CD8-positive, alpha-beta T cell (primary cell): ENCODE measurements at regions of chr12 and their contacts with region 1.

Region 1: GRCh38 chr12:31728917-31729640 is at the start of gene AMN1:
- DNase-seq: peak; percentile 97 to 100 (median 98)
- ATAC-seq: peak; percentile 89
- H3K4me3 ChIP-seq: peak within 1 kb of the TSS; percentile 72 to 76
- H3K4me3 Mint-ChIP-seq: peak within 1 kb of the TSS; percentile 99
- H3K27ac ChIP-seq: peak within 1 kb of the TSS; percentile 91 to 92
- H3K27ac Mint-ChIP-seq: peak within 1 kb of the TSS; percentile 99
- H3K4me1 ChIP-seq: peaks cover 34% of the 10 kb centered on the region
- H3K4me1 Mint-ChIP-seq: peaks cover 65% of the 10 kb centered on the region
- H3K27me3 ChIP-seq: no peaks in the 10 kb centered on the region
- H3K27me3 Mint-ChIP-seq: no peaks in the 10 kb centered on the region
- CTCF ChIP-seq: no peak
- total RNA-seq, gene AMN1: 5.9 to 6.2 TPM

Region 2: DNA sequence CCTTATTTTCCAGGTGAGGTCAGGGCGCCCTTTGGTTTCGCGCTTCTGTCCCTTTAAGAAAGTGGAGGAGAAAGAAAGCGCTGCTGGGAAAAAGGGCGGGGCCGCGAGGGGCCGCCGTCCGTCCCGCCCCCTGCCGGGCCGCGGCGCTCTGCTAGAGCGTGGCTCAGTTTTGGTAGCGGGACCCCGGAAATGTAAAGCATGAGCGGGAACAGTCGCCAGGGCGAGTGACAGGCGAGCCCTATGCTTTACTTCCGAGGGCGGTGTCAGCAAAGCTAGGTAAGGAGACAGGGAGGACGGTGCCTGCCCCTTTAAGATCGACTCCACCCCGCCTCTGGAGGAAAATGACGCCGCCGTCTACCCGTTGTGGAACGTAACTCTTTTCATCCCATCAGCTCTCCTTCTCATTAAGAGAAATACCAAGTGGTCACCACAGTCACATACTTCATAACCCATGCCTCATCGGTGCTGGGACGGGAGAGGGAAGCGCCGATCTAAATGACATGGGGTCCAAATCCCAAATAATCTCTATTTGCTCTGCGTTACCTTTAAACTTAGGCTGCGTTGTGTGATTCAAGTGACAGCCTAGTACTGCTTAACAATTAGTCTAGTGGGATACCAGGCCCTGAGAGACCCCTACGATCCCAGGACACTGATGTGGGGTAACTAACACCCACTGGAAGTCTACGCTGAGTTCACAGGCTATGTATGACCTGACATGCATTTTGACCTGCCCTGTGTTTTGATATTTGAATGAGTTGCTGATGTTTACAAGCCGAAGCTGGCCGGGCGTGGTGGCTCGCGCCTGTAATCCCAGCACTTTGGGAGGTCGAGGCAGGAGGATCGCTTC is 69.8 kb before region 1 on chr12 and contains the start of gene ETFBKMT:
- CTCF ChIA-PET with region 1: interaction called, 4 read pairs
- POLR2A ChIA-PET with region 1: interaction called, 7 read pairs
- intact Hi-C with region 1: loop called (anchors 1 kb)
- DNase-seq: peak; percentile 84 to 97 (median 92)
- ATAC-seq: peak; percentile 99
- H3K4me3 ChIP-seq: peak within 1 kb of the TSS; percentile 82 to 87
- H3K4me3 Mint-ChIP-seq: peak within 1 kb of the TSS; percentile 98
- H3K27ac ChIP-seq: peak within 1 kb of the TSS; percentile 89 to 92
- H3K27ac Mint-ChIP-seq: peak within 1 kb of the TSS; percentile 100
- H3K4me1 ChIP-seq: peaks cover 11% of the 10 kb centered on the region
- H3K4me1 Mint-ChIP-seq: peaks cover 14% of the 10 kb centered on the region
- H3K27me3 ChIP-seq: no peaks in the 10 kb centered on the region
- H3K27me3 Mint-ChIP-seq: no peaks in the 10 kb centered on the region
- CTCF ChIP-seq: peak; percentile 22
- total RNA-seq, gene ETFBKMT: 0.41 to 1.0 TPM

Region 3: DNA sequence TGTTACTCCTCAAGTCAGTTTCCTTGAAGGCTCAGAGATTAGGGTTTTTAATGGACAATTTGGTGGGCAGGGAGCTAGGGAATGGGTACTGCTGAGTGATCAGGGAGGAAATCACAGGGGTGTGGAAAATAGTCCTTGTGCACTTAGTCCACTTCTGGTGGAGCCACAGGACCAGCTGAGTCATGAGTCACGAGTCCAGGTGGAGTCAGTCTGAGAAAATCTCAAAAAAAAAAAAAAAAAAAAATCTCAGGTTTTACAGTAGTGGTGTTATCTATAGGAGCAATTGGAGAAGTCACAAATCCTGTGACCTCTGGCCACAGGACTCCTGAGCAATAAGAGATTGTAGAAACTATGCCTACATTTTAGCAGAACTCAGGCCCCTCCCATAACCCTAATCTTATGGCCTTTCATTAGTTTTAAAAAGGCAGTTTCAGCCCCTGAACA is 27.9 kb after region 1 on chr12:
- CTCF ChIA-PET with region 1: no interaction called
- POLR2A ChIA-PET with region 1: no interaction called
- intact Hi-C with region 1: loop called in 1 of 2 experiments (anchors 5 kb)
- DNase-seq: no peak
- ATAC-seq: no peak
- H3K4me3 ChIP-seq: no peak overlapping the region
- H3K4me3 Mint-ChIP-seq: no peak overlapping the region
- H3K27ac ChIP-seq: no peak overlapping the region
- H3K27ac Mint-ChIP-seq: no peak overlapping the region
- H3K4me1 ChIP-seq: no peaks in the 10 kb centered on the region
- H3K4me1 Mint-ChIP-seq: peaks cover 21% of the 10 kb centered on the region
- H3K27me3 ChIP-seq: peaks cover 0 to 2% of the 10 kb centered on the region in 2 experiments
- H3K27me3 Mint-ChIP-seq: no peaks in the 10 kb centered on the region
- CTCF ChIP-seq: no peak

Region 4: GRCh38 chr12:31890295-31891285 is 161.5 kb after region 1 on chr12:
- CTCF ChIA-PET with region 1: interaction called, 3 read pairs
- POLR2A ChIA-PET with region 1: interaction called, 25 read pairs
- intact Hi-C with region 1: no loop called
- DNase-seq: peak in 3 of 9 experiments; percentile 16 to 81 (median 64)
- ATAC-seq: peak; percentile 89
- H3K4me3 ChIP-seq: no peak overlapping the region
- H3K4me3 Mint-ChIP-seq: peak overlapping the region; percentile 51
- H3K27ac ChIP-seq: peak overlapping the region; percentile 19 to 66
- H3K27ac Mint-ChIP-seq: peak overlapping the region; percentile 90
- H3K4me1 ChIP-seq: peaks cover 70% of the 10 kb centered on the region
- H3K4me1 Mint-ChIP-seq: peaks cover 60% of the 10 kb centered on the region
- H3K27me3 ChIP-seq: no peaks in the 10 kb centered on the region
- H3K27me3 Mint-ChIP-seq: no peaks in the 10 kb centered on the region
- CTCF ChIP-seq: no peak

Region 5: GRCh38 chr12:31966558-31967205 is 237.6 kb after region 1 on chr12:
- CTCF ChIA-PET with region 1: no interaction called
- POLR2A ChIA-PET with region 1: interaction called, 59 read pairs
- intact Hi-C with region 1: no loop called
- DNase-seq: peak in 2 of 9 experiments; percentile 33 to 45
- ATAC-seq: no peak
- H3K4me3 ChIP-seq: peak overlapping the region; percentile 16 to 40
- H3K4me3 Mint-ChIP-seq: peak overlapping the region; percentile 84
- H3K27ac ChIP-seq: peak overlapping the region; percentile 22 to 73
- H3K27ac Mint-ChIP-seq: peak overlapping the region; percentile 95
- H3K4me1 ChIP-seq: peaks cover 92% of the 10 kb centered on the region
- H3K4me1 Mint-ChIP-seq: peaks cover 91% of the 10 kb centered on the region
- H3K27me3 ChIP-seq: no peaks in the 10 kb centered on the region
- H3K27me3 Mint-ChIP-seq: no peaks in the 10 kb centered on the region
- CTCF ChIP-seq: no peak